Aorta (tissue), 5 donors: ENCODE measurements at regions of chr12 and their contacts with region 1.

Region 1: GRCh38 chr12:76878899-76879709 is at the start of gene CSRP2:
- DNase-seq: peak; percentile 94 to 97
- ATAC-seq: peak; percentile 97
- H3K4me3 ChIP-seq: peak within 1 kb of the TSS; percentile 68 to 98
- H3K27ac ChIP-seq: peak within 1 kb of the TSS; percentile 63 to 89
- H3K4me1 ChIP-seq: peaks cover 0 to 5% of the 10 kb centered on the region in 2 donors
- H3K27me3 ChIP-seq: no peaks in the 10 kb centered on the region
- total RNA-seq, gene CSRP2: 67.4 to 163 TPM

Region 2: DNA sequence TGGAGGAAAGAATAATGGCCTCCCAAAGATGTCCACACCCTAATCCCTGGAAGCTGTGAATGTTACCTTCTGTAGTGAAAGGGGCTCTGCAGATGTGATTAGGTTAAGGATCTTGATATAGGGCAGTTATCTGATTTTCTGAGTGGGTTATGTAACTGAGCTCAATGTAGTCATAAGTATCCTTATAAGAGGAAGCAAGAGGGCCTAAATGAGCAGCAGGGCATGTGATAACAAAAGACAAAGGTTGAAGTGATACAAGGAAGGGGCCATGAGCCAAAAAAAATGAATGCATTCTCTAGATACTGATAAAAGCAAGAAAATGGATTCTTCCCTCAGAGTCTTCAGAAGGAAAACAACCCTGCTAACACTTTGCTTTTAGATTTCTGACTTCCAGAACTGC is 398.3 kb before region 1 on chr12:
- intact Hi-C with region 1: no loop called
- DNase-seq: no peak
- ATAC-seq: no peak
- H3K4me3 ChIP-seq: no peak overlapping the region
- H3K27ac ChIP-seq: no peak overlapping the region
- H3K4me1 ChIP-seq: no peaks in the 10 kb centered on the region
- H3K27me3 ChIP-seq: no peaks in the 10 kb centered on the region

Region 3: GRCh38 chr12:76706101-76706500 is 173.0 kb before region 1 on chr12:
- intact Hi-C with region 1: no loop called
- DNase-seq: no peak
- ATAC-seq: no peak
- H3K4me3 ChIP-seq: no peak overlapping the region
- H3K27ac ChIP-seq: no peak overlapping the region
- H3K4me1 ChIP-seq: no peaks in the 10 kb centered on the region
- H3K27me3 ChIP-seq: no peaks in the 10 kb centered on the region

Region 4: GRCh38 chr12:76919383-76920171 is 40.5 kb after region 1 on chr12:
- intact Hi-C with region 1: loop called in 1 of 2 experiments (anchors 5 kb)
- DNase-seq: no peak
- ATAC-seq: no peak
- H3K4me3 ChIP-seq: no peak overlapping the region
- H3K27ac ChIP-seq: peak overlapping the region in 1 of 2 donors; percentile 1
- H3K4me1 ChIP-seq: peaks cover 2 to 9% of the 10 kb centered on the region in 2 donors
- H3K27me3 ChIP-seq: no peaks in the 10 kb centered on the region

Region 5: GRCh38 chr12:76927170-76927784 is 48.2 kb after region 1 on chr12:
- intact Hi-C with region 1: loop called in 1 of 2 experiments (anchors 5 kb)
- DNase-seq: no peak
- ATAC-seq: no peak
- H3K4me3 ChIP-seq: no peak overlapping the region
- H3K27ac ChIP-seq: no peak overlapping the region
- H3K4me1 ChIP-seq: peaks cover 2 to 3% of the 10 kb centered on the region in 2 donors
- H3K27me3 ChIP-seq: no peaks in the 10 kb centered on the region

Region 6: DNA sequence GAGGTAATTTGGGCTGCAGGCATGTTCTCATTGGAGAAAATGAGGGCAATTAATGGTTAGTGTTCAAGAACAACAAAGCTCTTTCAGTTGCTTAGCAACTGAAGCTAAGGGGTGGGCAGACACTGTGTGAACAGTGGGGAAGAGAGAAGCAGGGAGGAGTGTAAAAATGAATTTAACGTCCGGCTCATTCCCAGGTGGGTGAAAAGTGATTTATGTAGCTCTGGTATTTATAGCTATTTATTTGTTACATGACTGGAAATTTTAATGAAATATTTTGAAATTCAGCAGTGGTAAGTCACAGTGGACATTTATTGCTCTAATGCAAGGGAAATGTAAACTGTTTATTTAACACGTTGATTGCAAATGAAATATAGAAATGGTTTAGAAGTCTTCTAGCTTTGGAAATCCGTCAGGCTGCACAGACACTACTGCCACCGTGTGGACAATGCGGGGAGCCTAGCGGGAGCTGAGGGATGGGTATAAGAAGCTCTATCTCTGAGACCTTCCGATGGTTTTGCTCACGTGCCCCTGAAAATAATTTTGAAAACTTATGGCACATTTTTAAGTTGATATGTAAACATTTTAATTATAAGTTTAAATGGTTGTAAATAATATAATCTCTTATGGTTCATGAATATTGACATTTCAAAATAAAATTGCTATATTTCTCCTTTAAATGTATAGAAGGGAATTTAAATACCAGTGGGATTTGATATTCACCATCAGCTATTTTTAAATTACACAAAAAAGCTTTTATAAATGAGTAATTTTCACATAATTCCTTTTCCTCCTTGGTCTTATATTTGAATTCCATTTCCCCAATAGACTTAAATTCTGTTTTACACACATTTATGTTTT is 131.8 kb after region 1 on chr12:
- intact Hi-C with region 1: loop called in 1 of 2 experiments (anchors 5 kb)
- DNase-seq: peak; percentile 66 to 88
- ATAC-seq: peak; percentile 87
- H3K4me3 ChIP-seq: no peak overlapping the region
- H3K27ac ChIP-seq: no peak overlapping the region
- H3K4me1 ChIP-seq: peaks cover 0 to 2% of the 10 kb centered on the region in 2 donors
- H3K27me3 ChIP-seq: no peaks in the 10 kb centered on the region